Ovary (tissue), 10 donors: ENCODE measurements at regions of chr21 and their contacts with region 1.

Region 1: GRCh38 chr21:41816220-41817165 is 49.6 kb upstream of the RIPK4 start:
- DNase-seq: peak; percentile 60 to 78 (median 72)
- H3K4me3 ChIP-seq: no peak overlapping the region
- H3K27ac ChIP-seq: no peak overlapping the region
- H3K4me1 ChIP-seq: no peaks in the 10 kb centered on the region
- H3K27me3 ChIP-seq: no peaks in the 10 kb centered on the region
- CTCF ChIP-seq: peak; percentile 56 to 74 (median 61)
- EP300 ChIP-seq: no peak
- POLR2A ChIP-seq: no peak

Region 2: DNA sequence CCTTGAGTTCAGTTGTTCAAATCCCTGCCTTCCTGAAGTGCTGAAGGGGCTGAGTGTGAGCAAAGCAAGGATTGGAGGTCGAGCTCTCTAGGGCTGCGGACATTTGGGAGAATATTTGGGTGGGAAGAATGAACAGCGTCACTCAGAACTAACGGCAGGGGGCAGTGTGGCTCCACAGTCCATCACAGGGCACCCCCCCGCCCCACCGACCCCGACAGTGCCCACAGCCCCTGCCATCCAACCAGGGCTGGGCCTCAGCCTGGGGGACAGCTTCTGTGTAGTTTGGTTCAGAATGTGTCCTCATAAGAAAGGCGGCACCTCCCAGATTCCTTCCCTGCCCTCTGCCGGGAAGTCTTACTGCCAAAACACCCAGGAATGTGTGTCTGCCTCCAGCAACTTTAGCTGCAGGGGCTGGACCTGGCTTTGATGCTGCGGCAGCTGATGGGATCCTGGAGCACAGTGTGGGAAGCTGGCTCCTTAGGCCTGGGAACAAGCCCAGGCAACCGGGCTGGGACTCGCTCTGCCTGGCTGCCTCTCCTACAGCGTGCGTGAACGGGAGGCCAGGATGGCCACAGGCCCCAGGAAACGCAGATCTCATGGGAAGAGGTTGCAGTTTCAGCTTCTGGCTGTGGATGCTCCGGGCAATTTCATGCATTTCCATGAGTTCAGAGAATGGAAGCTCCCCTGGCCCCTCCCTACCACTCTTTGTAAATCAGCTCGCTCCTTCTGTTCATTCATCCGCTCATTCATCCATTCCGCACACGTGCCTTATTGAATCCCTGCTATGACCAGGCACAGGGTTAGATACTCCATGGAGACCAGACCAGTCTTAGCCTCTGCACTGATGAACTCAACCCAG is 203.6 kb before region 1 on chr21:
- intact Hi-C with region 1: loop called in 1 of 4 experiments (anchors 5 kb)
- DNase-seq: peak; percentile 74 to 88 (median 79)
- H3K4me3 ChIP-seq: no peak overlapping the region
- H3K27ac ChIP-seq: peak overlapping the region; percentile 2 to 22
- H3K4me1 ChIP-seq: peaks cover 1% of the 10 kb centered on the region
- H3K27me3 ChIP-seq: no peaks in the 10 kb centered on the region
- CTCF ChIP-seq: peak; percentile 48 to 81 (median 60)
- EP300 ChIP-seq: no peak
- POLR2A ChIP-seq: no peak

Region 3: DNA sequence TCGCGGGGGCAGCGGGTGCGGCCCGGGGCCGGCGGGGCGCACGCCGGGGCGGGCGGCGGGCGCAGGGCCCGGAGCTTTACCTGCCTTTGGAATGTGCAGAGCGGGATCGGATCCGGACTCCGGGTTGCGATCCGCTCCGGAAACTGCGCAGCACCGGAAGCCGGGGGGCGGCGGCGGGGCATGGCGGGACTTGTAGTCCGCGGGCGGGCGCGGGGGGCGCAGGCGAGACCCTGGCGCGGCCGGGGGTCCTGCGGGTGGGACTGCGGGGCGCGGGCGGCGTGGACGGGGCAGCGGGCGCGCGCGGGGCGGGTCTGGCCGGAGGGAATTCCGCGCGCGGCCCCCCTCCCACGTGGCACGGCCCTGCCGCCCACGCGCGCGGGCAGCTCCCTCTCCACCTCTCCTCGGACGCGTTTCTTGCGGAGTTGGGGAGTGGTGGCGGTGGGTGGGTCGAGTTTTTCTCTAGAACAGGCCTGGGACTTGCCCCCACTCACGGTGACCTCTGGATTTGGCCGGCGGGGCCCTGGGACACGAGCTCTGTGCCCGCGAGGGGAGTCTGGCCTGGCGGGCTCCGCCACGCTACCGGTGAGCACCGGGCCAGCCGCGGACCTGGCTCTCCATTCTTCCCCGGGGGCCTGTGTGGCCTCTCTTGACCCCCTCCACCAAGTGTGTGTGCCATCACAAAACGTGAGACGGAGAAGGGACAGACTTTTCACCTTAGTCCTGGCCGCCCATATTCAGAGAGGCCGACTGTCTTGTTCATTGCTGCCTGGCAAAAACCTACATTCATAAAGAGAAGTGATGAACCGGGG is 62.9 kb after region 1 on chr21 and contains the start of gene PRDM15:
- intact Hi-C with region 1: loop called in 1 of 4 experiments (anchors 10 kb)
- DNase-seq: peak; percentile 80 to 89 (median 87)
- H3K4me3 ChIP-seq: peak within 1 kb of the TSS; percentile 80
- H3K27ac ChIP-seq: peak within 1 kb of the TSS; percentile 67 to 69
- H3K4me1 ChIP-seq: peaks cover 7% of the 10 kb centered on the region
- H3K27me3 ChIP-seq: no peaks in the 10 kb centered on the region
- CTCF ChIP-seq: no peak
- EP300 ChIP-seq: no peak
- POLR2A ChIP-seq: peak; percentile 26
- total RNA-seq, gene PRDM15: 5.2 to 10.9 (median 6.0) TPM

Region 4: DNA sequence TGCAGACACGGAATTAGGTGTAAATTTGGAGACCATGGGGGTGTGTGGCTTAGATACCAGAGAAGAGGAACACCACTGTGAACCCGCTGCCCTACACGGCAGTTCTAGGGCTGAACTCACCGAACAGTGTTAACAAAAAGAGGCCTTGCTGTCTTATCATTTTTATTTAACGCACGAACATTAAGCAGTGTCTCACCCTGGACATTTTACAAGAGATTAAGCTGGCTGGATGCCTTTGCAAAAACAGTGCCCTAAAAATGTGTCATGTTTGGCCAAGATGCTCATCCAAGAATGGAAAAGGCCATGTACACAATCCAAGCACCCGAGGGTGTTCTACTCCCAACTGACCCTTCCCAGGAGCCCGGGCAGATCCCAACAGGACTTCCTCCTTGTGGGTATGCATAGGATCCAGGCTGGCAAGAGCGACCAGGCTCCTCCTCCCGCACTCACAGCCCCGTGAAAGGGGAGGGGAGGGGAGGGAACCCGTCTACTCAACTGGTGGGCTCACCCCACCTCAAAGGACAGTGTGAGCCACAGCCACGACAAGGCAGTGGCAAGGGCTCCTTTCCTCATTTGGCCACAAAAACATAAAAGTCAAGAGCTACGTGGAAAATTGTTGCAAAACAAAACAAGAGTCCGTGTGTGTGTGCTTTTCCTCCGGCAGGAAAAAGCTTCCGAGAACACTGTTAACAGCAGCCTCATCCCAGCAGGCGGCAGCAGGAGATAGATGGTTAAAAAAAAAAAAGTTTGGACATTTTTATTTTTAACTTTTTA is 117.0 kb after region 1 on chr21:
- intact Hi-C with region 1: loop called in 1 of 4 experiments (anchors 10 kb)
- DNase-seq: peak in 3 of 5 donors; percentile 37 to 54 (median 52)
- H3K4me3 ChIP-seq: no peak overlapping the region
- H3K27ac ChIP-seq: peak overlapping the region; percentile 32 to 64
- H3K4me1 ChIP-seq: peaks cover 20% of the 10 kb centered on the region
- H3K27me3 ChIP-seq: no peaks in the 10 kb centered on the region
- CTCF ChIP-seq: peak in 1 of 3 donors; percentile 30
- EP300 ChIP-seq: no peak
- POLR2A ChIP-seq: no peak